ENCODE measurements at regions of chr17 and their contacts with region 1.

Region 1: DNA sequence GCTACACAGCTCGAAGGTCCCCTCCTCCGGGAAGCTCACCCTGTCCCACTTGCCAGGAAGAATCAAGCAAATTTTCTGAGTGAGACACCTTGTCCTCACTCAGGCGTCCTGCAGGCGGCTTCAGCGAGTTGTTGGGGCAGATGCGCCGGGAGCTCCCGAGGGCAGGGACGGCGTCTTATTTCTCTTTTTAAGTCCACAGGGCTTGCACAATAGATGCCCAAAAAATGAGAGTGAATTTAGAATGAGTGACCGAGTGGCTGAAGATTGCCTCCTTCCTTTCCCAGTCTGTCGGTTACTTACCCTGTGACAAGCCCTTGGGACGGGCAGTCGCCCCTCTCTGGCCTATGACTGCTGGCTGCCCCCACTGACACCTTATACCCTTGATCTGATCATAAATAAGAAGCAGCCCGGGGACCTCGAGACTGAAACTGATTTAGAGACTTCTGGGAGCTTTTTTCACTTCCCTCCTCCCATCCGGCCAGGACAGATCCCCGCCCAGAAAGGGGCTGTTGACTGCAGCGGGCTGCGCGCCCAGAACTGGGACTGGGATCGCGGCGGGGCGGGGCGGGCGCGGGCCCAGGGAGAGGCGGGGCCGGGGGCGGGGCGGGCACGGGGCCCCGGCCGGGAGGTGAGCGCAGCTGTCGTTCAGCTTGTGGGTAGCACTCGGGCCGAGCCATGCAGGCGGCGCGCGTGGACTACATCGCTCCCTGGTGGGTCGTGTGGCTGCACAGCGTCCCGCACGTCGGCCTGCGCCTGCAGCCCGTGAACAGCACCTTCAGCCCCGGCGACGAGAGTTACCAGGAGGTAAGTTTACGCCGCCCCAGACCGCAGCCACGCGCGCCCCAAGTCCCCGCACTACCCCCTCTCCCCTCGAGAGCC is at the start of gene TTYH2:
- DNase-seq: peak; percentile 66
- H3K4me3 Mint-ChIP-seq: peak within 1 kb of the TSS; percentile 88
- H3K27ac Mint-ChIP-seq: peak within 1 kb of the TSS; percentile 66
- H3K4me1 Mint-ChIP-seq: peaks cover 53% of the 10 kb centered on the region
- H3K27me3 Mint-ChIP-seq: peaks cover 4% of the 10 kb centered on the region
- total RNA-seq, gene TTYH2: 5.7 and 6.8 TPM in 2 replicates

Region 2: GRCh38 chr17:73231841-73232586 is 981.1 kb before region 1 on chr17:
- intact Hi-C with region 1: loop called (anchors 5 kb)
- DNase-seq: peak; percentile 97
- H3K4me3 Mint-ChIP-seq: peak overlapping the region; percentile 97
- H3K27ac Mint-ChIP-seq: peak overlapping the region; percentile 95
- H3K4me1 Mint-ChIP-seq: peaks cover 57% of the 10 kb centered on the region
- H3K27me3 Mint-ChIP-seq: no peaks in the 10 kb centered on the region

Region 3: GRCh38 chr17:74296548-74296936 is 83.4 kb after region 1 on chr17:
- intact Hi-C with region 1: loop called (anchors 1 kb)
- DNase-seq: peak; percentile 24
- H3K4me3 Mint-ChIP-seq: no peak overlapping the region
- H3K27ac Mint-ChIP-seq: no peak overlapping the region
- H3K4me1 Mint-ChIP-seq: peaks cover 21% of the 10 kb centered on the region
- H3K27me3 Mint-ChIP-seq: peaks cover 11% of the 10 kb centered on the region

Region 4: GRCh38 chr17:74361230-74362068 is 148.3 kb after region 1 on chr17 and contains the start of gene BTBD17:
- intact Hi-C with region 1: loop called (anchors 1 kb)
- DNase-seq: no peak
- H3K4me3 Mint-ChIP-seq: no peak within 1 kb of the TSS
- H3K27ac Mint-ChIP-seq: no peak within 1 kb of the TSS
- H3K4me1 Mint-ChIP-seq: peaks cover 4% of the 10 kb centered on the region
- H3K27me3 Mint-ChIP-seq: peaks cover 19% of the 10 kb centered on the region
- total RNA-seq, gene BTBD17: not detected in 2 replicates

Region 5: DNA sequence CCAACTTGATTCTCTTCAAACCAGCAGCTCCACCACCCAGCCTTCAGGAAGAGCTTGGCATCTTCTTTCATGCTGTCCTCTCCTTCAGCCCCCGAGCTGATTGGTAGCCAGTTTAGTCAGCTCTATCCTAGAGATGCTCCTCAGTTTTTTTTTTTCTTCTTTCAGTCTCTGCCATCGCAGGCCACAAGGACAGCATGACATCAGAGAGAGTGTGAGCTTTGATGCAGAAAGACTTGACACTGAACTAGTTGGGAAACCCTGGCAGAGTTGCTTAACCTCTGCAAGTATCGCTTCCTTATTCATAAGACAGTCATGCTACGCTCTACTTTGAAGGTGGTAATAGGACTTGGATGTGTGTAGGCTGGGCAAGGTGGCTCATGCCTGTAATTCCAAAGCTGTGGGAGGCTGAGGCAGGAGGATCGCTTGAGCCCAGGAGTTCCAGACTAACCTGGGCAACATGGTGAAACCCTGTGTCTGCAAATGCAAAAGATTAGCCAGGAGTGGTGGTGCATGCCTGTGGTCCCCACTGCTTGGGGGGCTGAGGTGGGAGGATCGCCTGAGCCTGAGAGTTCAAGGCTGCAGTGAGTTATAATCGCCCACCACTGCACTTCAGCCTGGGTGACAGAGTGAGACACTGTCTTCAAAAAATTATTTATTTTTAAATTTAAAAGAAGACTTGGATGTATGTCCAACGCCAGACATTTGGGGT is 315.5 kb after region 1 on chr17:
- intact Hi-C with region 1: loop called (anchors 5 kb)
- DNase-seq: no peak
- H3K4me3 Mint-ChIP-seq: no peak overlapping the region
- H3K27ac Mint-ChIP-seq: no peak overlapping the region
- H3K4me1 Mint-ChIP-seq: peaks cover 6% of the 10 kb centered on the region
- H3K27me3 Mint-ChIP-seq: peaks cover 33% of the 10 kb centered on the region

Measured in activated T-helper 1 cell treated with anti-CD3 and anti-CD28 coated beads, Interleukin-12 subunit alpha, Interleukin-12 subunit beta, Interleukin-2, Interleukin-4 antibody, amounts not matched to agents 30 ng/mL and 10 ng/mL and 1 ng/mL, durations not matched to agents 14 hours and 24 hours and 36 hours (primary cell).